Sigmoid colon (tissue), 7 donors: ENCODE measurements at regions of chr6 and their contacts with region 1.

Region 1: GRCh38 chr6:151451950-151452749 is at the start of gene RMND1:
- DNase-seq: peak; percentile 100
- H3K4me3 ChIP-seq: peak within 1 kb of the TSS; percentile 78 to 98 (median 83)
- H3K27ac ChIP-seq: peak within 1 kb of the TSS; percentile 90 to 97 (median 94)
- H3K4me1 ChIP-seq: peaks cover 0 to 36% (median 26%) of the 10 kb centered on the region in 4 donors
- H3K27me3 ChIP-seq: no peaks in the 10 kb centered on the region
- CTCF ChIP-seq: no peak
- EP300 ChIP-seq: peak in 2 of 4 donors; percentile 59 to 64
- POLR2A ChIP-seq: peak; percentile 42
- total RNA-seq, gene RMND1: 12.4 to 26.3 (median 20.7) TPM

Region 2: DNA sequence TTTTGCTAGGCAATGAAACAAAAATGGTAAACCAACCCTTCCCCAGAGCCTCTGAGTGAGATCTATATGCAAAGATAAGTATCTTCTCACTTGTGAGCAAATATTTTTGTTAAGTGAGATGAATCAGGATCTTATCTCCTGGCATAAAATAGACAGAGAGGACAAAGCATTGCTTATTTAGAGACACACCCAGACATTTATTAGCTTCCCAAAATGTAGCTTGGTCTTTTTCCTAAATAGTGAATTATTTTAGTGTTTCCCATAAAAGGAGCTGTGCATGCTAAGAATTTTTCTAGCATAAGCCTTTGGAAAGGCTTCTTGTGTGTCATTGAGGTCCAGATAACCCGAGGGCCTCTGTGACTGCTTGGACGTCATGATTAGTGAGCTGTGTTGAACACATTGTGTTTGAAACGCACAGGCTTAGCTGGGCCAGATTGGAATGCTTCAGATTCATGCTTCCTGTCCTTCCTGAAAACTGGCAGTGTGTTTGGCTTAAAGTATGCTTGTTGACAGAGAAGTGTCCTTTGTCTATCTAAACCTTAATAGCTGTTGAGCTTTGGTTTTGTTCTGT is 570.2 kb before region 1 on chr6:
- intact Hi-C with region 1: loop called (anchors 10 kb)
- DNase-seq: peak; percentile 69
- H3K4me3 ChIP-seq: no peak overlapping the region
- H3K27ac ChIP-seq: peak overlapping the region; percentile 38 to 64 (median 52)
- H3K4me1 ChIP-seq: peaks cover 0 to 42% (median 26%) of the 10 kb centered on the region in 4 donors
- H3K27me3 ChIP-seq: no peaks in the 10 kb centered on the region
- CTCF ChIP-seq: no peak
- EP300 ChIP-seq: no peak
- POLR2A ChIP-seq: no peak

Region 3: GRCh38 chr6:150894935-150895552 is 557.1 kb before region 1 on chr6:
- intact Hi-C with region 1: no loop called
- DNase-seq: peak; percentile 54
- H3K4me3 ChIP-seq: peak overlapping the region in 1 of 4 donors; percentile 0
- H3K27ac ChIP-seq: peak overlapping the region in 1 of 4 donors; percentile 41
- H3K4me1 ChIP-seq: peaks cover 0 to 37% (median 24%) of the 10 kb centered on the region in 4 donors
- H3K27me3 ChIP-seq: no peaks in the 10 kb centered on the region
- CTCF ChIP-seq: no peak
- EP300 ChIP-seq: no peak
- POLR2A ChIP-seq: no peak

Region 4: DNA sequence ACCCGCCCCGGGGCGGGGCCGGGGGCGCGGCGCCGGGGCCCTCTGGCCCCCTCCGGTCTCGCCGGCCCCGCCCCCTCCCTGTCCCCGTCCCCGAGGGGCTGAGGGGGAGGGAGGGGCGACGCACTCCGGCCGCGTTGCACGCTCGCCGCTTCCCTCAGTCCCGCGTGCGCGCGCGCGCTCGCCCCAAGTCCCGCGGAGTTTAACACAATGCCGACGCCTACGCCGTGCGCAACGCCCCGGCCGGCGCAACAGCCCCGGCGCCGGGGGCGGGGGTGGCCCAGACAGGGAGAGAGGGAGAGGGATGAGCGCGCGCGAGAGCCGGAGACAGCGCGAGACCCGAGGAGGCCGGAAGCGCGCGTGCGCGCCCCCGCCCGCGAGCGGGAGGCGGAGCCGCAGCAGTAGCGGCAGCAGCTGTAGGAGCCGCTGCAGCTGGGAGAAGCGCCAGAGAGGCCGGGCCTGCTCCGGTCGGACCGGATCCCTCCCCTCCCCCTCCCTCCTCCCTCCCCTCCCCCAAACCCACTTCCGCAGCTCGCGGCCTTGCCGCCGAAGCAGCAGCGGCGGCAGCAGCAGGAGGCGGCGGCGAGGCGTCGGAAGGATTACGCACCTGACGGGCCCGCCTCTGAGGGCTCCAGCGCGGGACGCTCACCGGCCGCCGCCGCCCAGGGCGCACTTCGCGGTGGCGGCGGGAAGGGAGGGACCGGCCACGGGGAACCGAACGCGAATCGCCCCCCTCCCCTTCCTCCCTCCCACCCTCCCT is 61.7 kb before region 1 on chr6:
- intact Hi-C with region 1: loop called (anchors 1 kb)
- DNase-seq: peak; percentile 98
- H3K4me3 ChIP-seq: peak overlapping the region; percentile 89 to 99 (median 95)
- H3K27ac ChIP-seq: peak overlapping the region; percentile 95 to 100 (median 100)
- H3K4me1 ChIP-seq: peaks cover 0 to 46% (median 33%) of the 10 kb centered on the region in 4 donors
- H3K27me3 ChIP-seq: no peaks in the 10 kb centered on the region
- CTCF ChIP-seq: no peak
- EP300 ChIP-seq: no peak
- POLR2A ChIP-seq: peak; percentile 46 to 60

Region 5: DNA sequence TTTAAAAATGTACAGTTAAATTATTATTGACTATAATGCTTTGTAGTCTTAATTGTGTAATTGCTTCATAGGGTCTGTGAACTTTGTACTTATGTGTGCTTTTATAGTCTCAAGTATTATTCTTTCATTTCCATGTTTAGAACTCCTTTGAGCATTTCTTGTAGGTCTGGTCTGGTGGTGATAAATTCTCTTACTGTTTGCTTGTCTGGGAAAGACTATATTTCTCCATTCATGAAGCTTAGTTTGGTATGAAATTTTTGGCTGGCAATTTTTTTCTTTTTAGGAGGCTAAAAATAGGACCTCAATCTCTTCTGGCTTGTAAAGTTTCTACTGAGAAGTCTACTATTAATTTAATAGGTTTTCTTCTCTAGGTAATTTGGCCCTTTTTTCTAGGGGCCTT is 109.1 kb after region 1 on chr6:
- intact Hi-C with region 1: no loop called
- DNase-seq: no peak
- H3K4me3 ChIP-seq: no peak overlapping the region
- H3K27ac ChIP-seq: no peak overlapping the region
- H3K4me1 ChIP-seq: no peaks in the 10 kb centered on the region
- H3K27me3 ChIP-seq: no peaks in the 10 kb centered on the region
- CTCF ChIP-seq: no peak
- EP300 ChIP-seq: no peak
- POLR2A ChIP-seq: no peak